ENCODE measurements at regions of chr3 and their contacts with region 1.

Region 1: DNA sequence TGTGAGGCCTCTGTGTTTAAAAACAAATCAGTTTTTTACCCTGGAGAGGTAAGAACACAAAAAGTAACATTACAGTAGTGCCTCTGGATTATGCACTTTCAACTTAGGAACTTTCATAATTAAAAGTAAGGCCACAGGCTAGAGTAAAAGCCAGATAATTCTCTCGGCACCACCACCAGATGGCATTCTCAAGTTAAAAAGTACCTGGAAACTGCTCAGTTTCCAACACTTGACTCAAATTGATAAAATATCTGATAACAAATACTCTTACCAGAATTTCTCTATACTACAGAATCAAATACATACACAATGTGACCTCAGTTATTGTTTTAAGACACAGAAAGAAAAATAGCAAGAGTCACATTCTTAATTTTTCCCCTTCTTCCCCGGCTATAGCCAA is 19.9 kb downstream of the SPICE1 start:
- DNase-seq: peak; percentile 52
- ATAC-seq: peak; percentile 66
- H3K4me3 Mint-ChIP-seq: no peak overlapping the region
- H3K27ac Mint-ChIP-seq: no peak overlapping the region
- H3K4me1 Mint-ChIP-seq: no peaks in the 10 kb centered on the region
- H3K27me3 Mint-ChIP-seq: no peaks in the 10 kb centered on the region

Region 2: DNA sequence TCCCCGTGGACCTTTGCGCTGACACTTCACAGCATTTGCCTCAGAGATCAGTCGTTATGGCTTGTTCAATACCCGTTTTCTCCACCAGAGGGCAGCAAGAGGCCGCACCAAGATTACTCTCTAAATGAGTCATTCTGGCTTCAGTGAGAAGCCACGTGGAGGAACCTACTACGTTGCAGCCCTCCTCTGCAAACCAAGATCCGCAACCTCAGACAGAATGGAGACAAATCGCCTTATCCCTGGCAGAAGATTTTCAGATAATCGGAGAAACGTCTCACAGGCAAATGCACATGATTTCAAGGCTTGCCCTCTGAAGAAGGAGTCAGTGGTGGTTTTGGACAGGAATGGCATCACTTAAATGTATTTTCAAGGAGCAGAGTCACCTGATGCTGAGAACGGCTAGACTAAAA is 443.7 kb before region 1 on chr3:
- CTCF ChIA-PET with region 1: no interaction called
- POLR2A ChIA-PET with region 1: no interaction called
- intact Hi-C with region 1: loop called in 1 of 2 experiments (anchors 10 kb)
- DNase-seq: peak; percentile 92
- ATAC-seq: peak; percentile 95
- H3K4me3 Mint-ChIP-seq: no peak overlapping the region
- H3K27ac Mint-ChIP-seq: no peak overlapping the region
- H3K4me1 Mint-ChIP-seq: peaks cover 2% of the 10 kb centered on the region
- H3K27me3 Mint-ChIP-seq: no peaks in the 10 kb centered on the region

Region 3: GRCh38 chr3:113428581-113428980 is 66.5 kb before region 1 on chr3:
- CTCF ChIA-PET with region 1: no interaction called
- POLR2A ChIA-PET with region 1: no interaction called
- intact Hi-C with region 1: no loop called
- DNase-seq: no peak
- ATAC-seq: no peak
- H3K4me3 Mint-ChIP-seq: no peak overlapping the region
- H3K27ac Mint-ChIP-seq: no peak overlapping the region
- H3K4me1 Mint-ChIP-seq: no peaks in the 10 kb centered on the region
- H3K27me3 Mint-ChIP-seq: no peaks in the 10 kb centered on the region

Region 4: DNA sequence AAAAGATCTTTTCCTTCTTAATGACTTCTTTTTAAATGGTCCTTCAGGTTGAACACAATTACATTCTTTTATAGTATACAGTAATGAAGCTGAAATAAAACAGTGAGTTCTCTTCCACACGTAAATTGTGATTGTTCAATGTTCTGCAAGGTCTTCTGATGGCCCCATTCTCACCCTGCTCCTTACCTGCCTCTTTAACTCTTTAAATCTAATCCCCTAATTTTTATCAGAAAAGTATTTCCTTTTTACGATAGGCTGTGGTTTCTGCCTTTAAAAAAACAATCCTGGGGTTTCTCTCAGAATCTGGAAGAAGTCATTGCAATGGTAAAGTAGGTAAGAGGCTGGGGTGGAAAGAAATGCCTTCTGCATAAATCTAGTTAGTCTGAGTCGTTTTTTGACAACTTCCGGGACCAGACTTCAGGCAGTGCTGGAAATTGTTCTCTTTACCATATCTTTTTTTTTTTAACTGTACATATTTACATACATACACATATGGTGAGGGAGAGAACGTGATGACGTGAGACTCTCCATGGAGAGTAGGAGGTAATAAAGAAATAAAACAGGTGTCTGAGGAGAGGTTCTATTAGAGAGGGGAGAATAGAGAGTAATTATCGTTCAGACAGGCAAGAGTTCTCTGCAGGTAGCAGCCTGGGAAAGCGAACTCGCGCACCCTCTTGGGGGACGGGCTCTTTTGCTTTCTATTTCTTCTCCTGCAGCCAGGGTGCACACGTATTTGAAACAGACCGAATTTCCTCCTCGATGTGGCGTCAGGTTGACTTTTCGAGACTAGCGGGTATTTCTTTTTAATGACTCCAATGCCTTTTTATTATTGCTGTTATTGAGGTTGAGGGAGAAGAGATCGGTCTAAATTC is 37.0 kb after region 1 on chr3 and contains the start of gene SIDT1:
- CTCF ChIA-PET with region 1: interaction called, 5 read pairs
- POLR2A ChIA-PET with region 1: interaction called, 5 read pairs
- intact Hi-C with region 1: loop called in 1 of 2 experiments (anchors 2 kb)
- DNase-seq: peak; percentile 85
- ATAC-seq: peak; percentile 78
- H3K4me3 Mint-ChIP-seq: peak within 1 kb of the TSS; percentile 89
- H3K27ac Mint-ChIP-seq: peak within 1 kb of the TSS; percentile 96
- H3K4me1 Mint-ChIP-seq: peaks cover 49% of the 10 kb centered on the region
- H3K27me3 Mint-ChIP-seq: no peaks in the 10 kb centered on the region
- total RNA-seq, gene SIDT1: 19.0 to 19.7 TPM

Region 5: DNA sequence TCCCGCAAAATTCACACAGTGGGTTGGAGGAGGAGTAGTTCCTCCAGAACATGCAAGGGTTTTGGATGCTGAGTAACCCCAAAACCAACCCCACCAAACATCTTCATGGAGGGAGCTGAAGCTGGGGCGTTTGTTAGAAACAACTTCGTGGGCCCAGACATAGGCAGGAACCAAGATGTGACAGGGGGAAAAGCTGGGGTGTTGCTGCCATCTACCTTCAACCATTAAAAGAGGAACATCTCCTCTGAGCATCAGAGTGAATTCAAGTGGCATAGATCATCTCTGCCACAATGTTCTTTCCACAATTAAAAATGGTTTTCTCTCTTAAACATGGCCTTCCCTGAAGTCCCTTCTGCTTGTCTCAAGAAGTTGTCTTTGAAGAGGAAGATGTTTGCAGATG is 57.8 kb after region 1 on chr3:
- CTCF ChIA-PET with region 1: interaction called, 18 read pairs
- POLR2A ChIA-PET with region 1: no interaction called
- intact Hi-C with region 1: loop called in 1 of 2 experiments (anchors 1 kb)
- DNase-seq: peak; percentile 38
- ATAC-seq: peak; percentile 42
- H3K4me3 Mint-ChIP-seq: no peak overlapping the region
- H3K27ac Mint-ChIP-seq: no peak overlapping the region
- H3K4me1 Mint-ChIP-seq: peaks cover 24% of the 10 kb centered on the region
- H3K27me3 Mint-ChIP-seq: no peaks in the 10 kb centered on the region

Region 6: DNA sequence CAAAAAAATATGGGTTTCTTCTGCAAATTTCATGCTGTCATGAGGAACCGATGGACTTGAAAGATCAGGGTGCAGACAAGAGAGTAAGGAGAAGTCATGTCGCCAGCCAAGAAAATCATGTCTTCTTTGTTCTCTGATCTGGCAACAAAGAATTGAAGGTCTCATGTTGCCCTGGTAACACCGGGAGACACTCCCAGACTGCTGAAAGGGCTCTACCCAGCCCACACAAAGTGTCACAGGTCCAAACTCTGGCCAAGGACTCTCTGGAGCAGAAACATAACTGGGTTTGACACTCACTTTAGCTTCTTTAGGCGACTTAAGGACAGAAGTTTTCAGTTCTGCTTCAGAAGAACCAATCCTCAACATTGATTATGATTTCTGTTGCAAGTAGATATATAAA is 80.2 kb after region 1 on chr3:
- CTCF ChIA-PET with region 1: interaction called, 84 read pairs
- POLR2A ChIA-PET with region 1: no interaction called
- intact Hi-C with region 1: loop called (anchors 1 kb)
- DNase-seq: no peak
- ATAC-seq: no peak
- H3K4me3 Mint-ChIP-seq: no peak overlapping the region
- H3K27ac Mint-ChIP-seq: no peak overlapping the region
- H3K4me1 Mint-ChIP-seq: peaks cover 8% of the 10 kb centered on the region
- H3K27me3 Mint-ChIP-seq: no peaks in the 10 kb centered on the region

Region 7: DNA sequence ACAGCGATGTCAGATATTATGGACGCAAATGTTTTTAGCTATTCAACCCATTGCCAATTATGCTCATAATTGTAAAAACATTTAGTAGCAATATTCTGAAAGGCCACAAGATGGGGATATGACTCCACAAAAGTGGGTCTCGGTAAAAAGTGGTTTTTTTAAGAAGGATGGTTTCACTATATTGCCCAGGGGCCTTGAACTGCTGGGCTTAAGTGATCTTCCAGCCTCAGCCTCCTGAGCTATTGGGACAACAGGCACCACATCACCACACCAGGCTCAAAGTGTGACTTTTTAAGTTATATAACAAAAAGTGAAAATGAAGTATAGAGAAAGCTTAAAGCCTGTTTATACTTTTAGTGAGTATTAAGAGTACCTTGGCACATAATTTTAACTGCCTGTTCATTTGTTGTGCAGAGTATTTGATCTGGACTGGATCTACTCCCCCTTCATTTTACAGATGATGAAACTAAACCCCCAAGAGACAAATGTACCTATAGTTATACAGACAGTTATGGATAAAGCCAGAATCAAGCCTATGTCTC is 241.6 kb after region 1 on chr3:
- CTCF ChIA-PET with region 1: interaction called, 4 read pairs
- POLR2A ChIA-PET with region 1: no interaction called
- intact Hi-C with region 1: loop called in 1 of 2 experiments (anchors 2 kb)
- DNase-seq: peak; percentile 25
- ATAC-seq: peak; percentile 86
- H3K4me3 Mint-ChIP-seq: no peak overlapping the region
- H3K27ac Mint-ChIP-seq: peak overlapping the region; percentile 74
- H3K4me1 Mint-ChIP-seq: peaks cover 67% of the 10 kb centered on the region
- H3K27me3 Mint-ChIP-seq: no peaks in the 10 kb centered on the region

Measured in activated CD4-positive, alpha-beta T cell treated with anti-CD3 and anti-CD28 coated beads for 36 hours (primary cell).